ENCODE measurements at regions of chr11 and their contacts with region 1.

Region 1: DNA sequence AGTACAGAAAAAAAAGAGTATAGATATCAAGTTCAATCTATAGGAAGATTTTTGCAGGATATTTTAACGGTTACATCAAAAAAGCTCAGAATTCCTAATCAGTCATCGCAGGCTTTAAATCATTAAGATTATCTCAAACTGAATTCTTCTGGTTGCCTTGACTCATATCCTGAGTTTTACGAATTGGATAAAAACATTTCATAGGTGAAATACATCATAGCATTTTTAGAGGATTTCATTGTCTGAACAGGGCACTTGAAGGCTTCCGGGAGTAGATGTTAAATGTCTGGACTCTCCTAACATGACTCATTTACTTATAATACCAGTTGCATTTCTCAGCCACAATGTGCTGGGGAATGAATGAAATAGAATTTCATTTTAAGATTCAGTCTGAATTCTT is 2216.6 kb upstream of the RAG2 start:
- DNase-seq: peak; percentile 83
- ATAC-seq: peak; percentile 99
- H3K4me3 ChIP-seq: no peak overlapping the region
- H3K27ac ChIP-seq: peak overlapping the region; percentile 71
- H3K4me1 ChIP-seq: peaks cover 14% of the 10 kb centered on the region
- H3K27me3 ChIP-seq: no peaks in the 10 kb centered on the region
- CTCF ChIP-seq: no peak

Region 2: DNA sequence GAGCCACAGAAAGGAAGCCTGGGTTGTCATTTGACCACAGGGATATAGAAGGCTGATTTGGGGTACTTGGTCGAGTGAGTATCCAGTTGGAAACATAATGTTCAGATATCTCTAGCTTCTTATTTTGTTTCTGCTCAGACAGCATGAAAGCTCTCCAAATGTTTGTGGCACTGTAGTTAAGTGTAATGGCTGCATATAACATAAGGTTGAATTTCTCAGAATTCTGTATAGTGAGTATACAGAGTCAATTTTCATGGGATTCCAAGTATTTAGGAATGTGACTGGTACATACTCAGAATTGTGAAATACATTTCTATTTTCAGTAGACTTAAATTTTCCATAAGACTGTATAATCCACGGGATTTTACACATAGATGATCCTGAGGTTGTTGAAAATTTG is 114.6 kb before region 1 on chr11:
- CTCF ChIA-PET with region 1: no interaction called
- POLR2A ChIA-PET with region 1: no interaction called
- intact Hi-C with region 1: no loop called
- DNase-seq: no peak
- ATAC-seq: no peak
- H3K4me3 ChIP-seq: no peak overlapping the region
- H3K27ac ChIP-seq: no peak overlapping the region
- H3K4me1 ChIP-seq: no peaks in the 10 kb centered on the region
- H3K27me3 ChIP-seq: no peaks in the 10 kb centered on the region
- CTCF ChIP-seq: no peak

Region 3: DNA sequence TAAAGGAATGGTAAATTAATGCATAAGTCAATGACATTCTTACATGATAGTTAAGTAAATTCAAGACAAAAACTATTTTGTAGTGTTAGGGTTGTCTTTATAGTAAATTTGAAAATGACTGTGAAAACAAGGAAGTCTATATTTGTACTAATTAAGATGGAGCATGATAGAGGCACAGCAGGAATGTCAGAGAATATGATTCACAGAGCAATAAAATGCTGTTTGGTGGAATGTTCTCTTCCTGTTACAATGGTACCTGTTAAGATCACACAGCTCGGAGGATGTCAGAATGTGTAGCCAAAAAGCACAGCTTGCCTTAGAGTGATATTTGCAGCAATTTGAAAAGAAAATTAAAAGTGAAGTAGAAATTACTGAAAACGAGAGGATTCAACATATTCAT is 123.0 kb after region 1 on chr11:
- CTCF ChIA-PET with region 1: no interaction called
- POLR2A ChIA-PET with region 1: no interaction called
- intact Hi-C with region 1: loop called (anchors 10 kb)
- DNase-seq: peak; percentile 57
- ATAC-seq: peak; percentile 98
- H3K4me3 ChIP-seq: no peak overlapping the region
- H3K27ac ChIP-seq: no peak overlapping the region
- H3K4me1 ChIP-seq: no peaks in the 10 kb centered on the region; the same call in 1 of the 2 replicates
- H3K27me3 ChIP-seq: no peaks in the 10 kb centered on the region
- CTCF ChIP-seq: no peak